T-cell (primary cell): ENCODE measurements at regions of chr22 and their contacts with region 1.

Region 1: DNA sequence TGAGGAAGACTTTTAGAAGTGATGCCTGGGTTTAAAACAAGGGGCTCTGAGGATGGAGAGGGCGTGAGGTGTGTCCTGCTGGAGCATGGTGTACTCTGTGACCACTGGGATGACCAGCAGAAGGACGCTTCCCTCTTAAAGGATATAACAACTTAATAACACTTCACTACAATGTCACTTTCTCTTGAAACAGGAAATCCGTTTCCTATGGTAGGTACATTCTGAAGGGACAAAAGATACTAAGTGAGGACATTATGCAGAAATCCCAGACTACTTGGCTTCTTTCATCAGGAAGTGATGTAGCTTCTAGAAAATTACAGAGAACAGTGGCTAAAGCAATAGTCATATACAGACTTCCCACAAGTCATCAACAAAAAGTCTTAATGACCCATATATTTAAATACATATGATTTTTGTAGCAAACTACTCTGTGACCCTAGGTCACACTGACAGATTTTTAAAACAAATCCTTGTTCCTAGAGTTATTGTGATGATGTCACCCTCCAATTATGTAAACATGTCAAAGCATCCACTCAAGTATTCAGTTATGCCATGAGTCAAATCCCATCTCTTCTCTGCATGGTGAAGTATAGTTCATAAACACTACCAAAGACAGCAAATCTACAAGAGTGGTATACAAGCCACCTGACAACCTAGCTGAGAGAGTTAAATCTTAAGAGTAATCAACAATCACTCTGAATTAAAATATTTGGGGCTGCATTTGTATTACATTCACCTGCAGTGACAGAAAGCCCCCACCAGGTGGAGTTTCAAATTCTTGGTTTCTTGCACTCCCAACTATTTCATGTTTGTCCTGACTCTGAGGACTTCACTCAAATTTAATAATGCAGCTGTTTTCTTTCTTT is 32.8 kb downstream of the PITPNB start:
- DNase-seq: peak in 28 of 35 experiments; percentile 6 to 63 (median 31)
- ATAC-seq: peak in 3 of 4 experiments; percentile 39 to 48 (median 40)
- H3K4me3 ChIP-seq: no peak overlapping the region
- H3K4me3 Mint-ChIP-seq: no peak overlapping the region
- H3K27ac ChIP-seq: no peak overlapping the region
- H3K27ac Mint-ChIP-seq: peak overlapping the region in 1 of 2 donors; percentile 22
- H3K4me1 ChIP-seq: no peaks in the 10 kb centered on the region
- H3K4me1 Mint-ChIP-seq: peaks cover 0 to 11% (median 7%) of the 10 kb centered on the region in 3 donors
- H3K27me3 ChIP-seq: no peaks in the 10 kb centered on the region
- H3K27me3 Mint-ChIP-seq: no peaks in the 10 kb centered on the region

Region 2: GRCh38 chr22:26008587-26008986 is 1877.6 kb before region 1 on chr22:
- CTCF ChIA-PET with region 1: no interaction called
- POLR2A ChIA-PET with region 1: no interaction called
- DNase-seq: no peak
- ATAC-seq: no peak
- H3K4me3 ChIP-seq: no peak overlapping the region
- H3K4me3 Mint-ChIP-seq: no peak overlapping the region
- H3K27ac ChIP-seq: no peak overlapping the region
- H3K27ac Mint-ChIP-seq: no peak overlapping the region
- H3K4me1 ChIP-seq: no peaks in the 10 kb centered on the region
- H3K4me1 Mint-ChIP-seq: no peaks in the 10 kb centered on the region
- H3K27me3 ChIP-seq: peaks cover 2 to 8% of the 10 kb centered on the region in 2 experiments
- H3K27me3 Mint-ChIP-seq: peaks cover 3 to 14% of the 10 kb centered on the region in 2 donors

Region 3: DNA sequence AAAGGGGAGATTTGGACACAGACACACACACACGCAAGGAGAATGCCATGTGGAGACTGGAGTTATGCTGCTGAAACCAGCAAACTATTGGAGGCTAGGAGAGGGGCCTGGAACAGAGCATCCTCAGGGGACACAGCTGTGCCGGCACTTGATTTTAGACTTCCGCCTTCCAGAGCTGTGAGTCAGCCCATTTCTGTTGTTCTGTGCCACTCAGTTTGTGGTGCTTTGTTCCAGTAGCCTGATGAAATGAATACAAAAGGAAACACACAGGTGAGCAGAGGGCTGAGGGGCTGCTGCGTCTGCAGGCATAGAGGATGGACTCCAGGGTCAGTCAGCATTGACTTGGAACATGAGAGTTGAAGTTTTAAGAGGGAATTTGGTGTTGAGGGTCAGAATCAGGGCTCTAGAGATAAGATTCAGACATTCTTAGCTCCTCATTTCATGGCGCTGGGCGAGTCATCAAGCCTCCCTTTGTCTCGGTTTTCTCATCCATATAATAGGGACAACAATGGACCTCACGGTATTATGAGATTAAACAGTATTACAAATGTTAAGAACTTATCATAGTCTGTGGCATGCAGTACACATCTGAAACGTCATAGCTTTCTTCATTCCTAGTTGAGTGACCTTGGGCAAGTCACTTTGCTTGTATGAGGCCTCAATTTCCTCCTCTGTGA is 1037.8 kb before region 1 on chr22:
- CTCF ChIA-PET with region 1: interaction called in 1 of 2 experiments, 13 read pairs
- POLR2A ChIA-PET with region 1: no interaction called
- DNase-seq: no peak
- ATAC-seq: no peak
- H3K4me3 ChIP-seq: no peak overlapping the region
- H3K4me3 Mint-ChIP-seq: no peak overlapping the region
- H3K27ac ChIP-seq: no peak overlapping the region
- H3K27ac Mint-ChIP-seq: no peak overlapping the region
- H3K4me1 ChIP-seq: no peaks in the 10 kb centered on the region
- H3K4me1 Mint-ChIP-seq: no peaks in the 10 kb centered on the region
- H3K27me3 ChIP-seq: no peaks in the 10 kb centered on the region
- H3K27me3 Mint-ChIP-seq: no peaks in the 10 kb centered on the region

Region 4: DNA sequence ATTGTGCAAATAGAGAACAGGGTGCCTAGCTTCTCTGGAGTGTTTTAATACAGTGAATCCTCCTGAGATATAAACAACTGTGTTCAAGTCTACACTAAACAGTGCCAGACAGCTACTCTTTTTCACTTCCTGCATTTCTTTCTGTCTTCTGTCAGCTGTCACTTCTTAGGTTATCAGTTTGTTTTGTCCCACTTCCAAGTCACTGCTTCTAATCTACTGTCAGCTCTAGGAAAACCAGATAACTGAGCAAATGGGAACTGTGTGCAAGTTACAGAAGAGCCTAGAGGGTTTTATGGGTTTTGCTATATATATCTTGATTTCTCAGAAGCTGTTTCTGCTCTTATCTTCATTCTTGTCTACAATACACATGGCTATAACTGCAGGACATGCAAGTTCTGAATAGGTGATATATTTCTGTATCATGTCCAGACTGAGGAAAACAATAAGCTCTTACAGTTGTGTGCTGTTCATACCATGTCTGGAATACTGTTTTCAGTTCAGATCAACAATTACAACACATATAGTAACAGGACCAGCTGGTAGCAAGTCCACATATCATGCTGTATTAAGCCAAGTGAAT is 27.0 kb after region 1 on chr22:
- CTCF ChIA-PET with region 1: interaction called in 1 of 2 experiments, 10 read pairs
- POLR2A ChIA-PET with region 1: interaction called in 1 of 2 experiments, 5 read pairs
- DNase-seq: no peak
- ATAC-seq: no peak
- H3K4me3 ChIP-seq: no peak overlapping the region
- H3K4me3 Mint-ChIP-seq: no peak overlapping the region
- H3K27ac ChIP-seq: no peak overlapping the region
- H3K27ac Mint-ChIP-seq: peak overlapping the region in 1 of 2 donors; percentile 3
- H3K4me1 ChIP-seq: peaks cover 6 to 22% of the 10 kb centered on the region in 2 experiments
- H3K4me1 Mint-ChIP-seq: peaks cover 55 to 59% (median 57%) of the 10 kb centered on the region in 3 donors
- H3K27me3 ChIP-seq: no peaks in the 10 kb centered on the region
- H3K27me3 Mint-ChIP-seq: no peaks in the 10 kb centered on the region

Region 5: GRCh38 chr22:28009272-28009827 is 123.1 kb after region 1 on chr22:
- CTCF ChIA-PET with region 1: interaction called, 13 to 15 read pairs
- POLR2A ChIA-PET with region 1: no interaction called
- DNase-seq: peak; percentile 25 to 82 (median 63)
- ATAC-seq: peak; percentile 66 to 89 (median 80)
- H3K4me3 ChIP-seq: no peak overlapping the region
- H3K4me3 Mint-ChIP-seq: no peak overlapping the region
- H3K27ac ChIP-seq: no peak overlapping the region
- H3K27ac Mint-ChIP-seq: no peak overlapping the region
- H3K4me1 ChIP-seq: no peaks in the 10 kb centered on the region
- H3K4me1 Mint-ChIP-seq: no peaks in the 10 kb centered on the region
- H3K27me3 ChIP-seq: peaks cover 0 to 6% of the 10 kb centered on the region in 2 experiments
- H3K27me3 Mint-ChIP-seq: peaks cover 0 to 2% of the 10 kb centered on the region in 2 donors

Region 6: GRCh38 chr22:29243874-29244446 is 1357.8 kb after region 1 on chr22:
- CTCF ChIA-PET with region 1: interaction called in 1 of 2 experiments, 10 read pairs
- POLR2A ChIA-PET with region 1: no interaction called
- DNase-seq: no peak
- ATAC-seq: no peak
- H3K4me3 ChIP-seq: no peak overlapping the region
- H3K4me3 Mint-ChIP-seq: no peak overlapping the region
- H3K27ac ChIP-seq: no peak overlapping the region
- H3K27ac Mint-ChIP-seq: no peak overlapping the region
- H3K4me1 ChIP-seq: peaks cover 0 to 4% of the 10 kb centered on the region in 2 experiments
- H3K4me1 Mint-ChIP-seq: peaks cover 0 to 6% (median 0%) of the 10 kb centered on the region in 3 donors
- H3K27me3 ChIP-seq: peaks cover 0 to 20% of the 10 kb centered on the region in 2 experiments
- H3K27me3 Mint-ChIP-seq: peaks cover 8 to 19% of the 10 kb centered on the region in 2 donors